A673 (cell line): ENCODE measurements at regions of chr17 and their contacts with region 1.

Region 1: GRCh38 chr17:33992113-33992512 is 263.0 kb upstream of the CCL2 start:
- DNase-seq: no peak
- H3K4me3 ChIP-seq: no peak overlapping the region
- H3K27ac ChIP-seq: no peak overlapping the region
- H3K4me1 ChIP-seq: no peaks in the 10 kb centered on the region
- H3K27me3 ChIP-seq: no peaks in the 10 kb centered on the region
- CTCF ChIP-seq: no peak

Region 2: GRCh38 chr17:34024386-34024785 is 32.3 kb after region 1 on chr17:
- CTCF ChIA-PET with region 1: interaction called, 14 read pairs
- POLR2A ChIA-PET with region 1: no interaction called
- intact Hi-C with region 1: no loop called
- DNase-seq: no peak
- H3K4me3 ChIP-seq: no peak overlapping the region
- H3K27ac ChIP-seq: no peak overlapping the region
- H3K4me1 ChIP-seq: no peaks in the 10 kb centered on the region
- H3K27me3 ChIP-seq: no peaks in the 10 kb centered on the region
- CTCF ChIP-seq: no peak

Region 3: DNA sequence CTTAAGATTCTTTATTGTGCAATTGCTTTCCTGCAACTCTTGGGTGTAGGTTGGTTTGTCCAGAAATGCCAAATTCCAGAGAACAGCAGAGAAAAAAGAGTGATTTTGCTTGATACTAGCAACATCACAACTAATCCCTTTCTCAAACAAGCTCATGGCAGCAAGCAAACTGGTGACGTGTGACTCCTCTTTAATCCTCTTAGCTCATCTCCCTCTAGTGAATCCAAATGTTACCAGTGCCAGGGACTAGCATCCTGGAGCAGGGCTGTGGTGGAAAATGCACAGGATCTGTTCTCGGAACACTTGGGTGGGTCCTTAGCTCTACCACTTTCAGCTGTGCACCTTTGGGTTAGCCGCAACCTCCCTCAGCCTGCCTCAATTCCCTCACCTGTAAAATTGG is 58.9 kb after region 1 on chr17:
- CTCF ChIA-PET with region 1: no interaction called
- POLR2A ChIA-PET with region 1: no interaction called
- intact Hi-C with region 1: no loop called
- DNase-seq: no peak
- H3K4me3 ChIP-seq: no peak overlapping the region
- H3K27ac ChIP-seq: no peak overlapping the region
- H3K4me1 ChIP-seq: no peaks in the 10 kb centered on the region
- H3K27me3 ChIP-seq: no peaks in the 10 kb centered on the region
- CTCF ChIP-seq: no peak